Right ventricle myocardium inferior (tissue), 1 donor: ENCODE measurements at regions of chr15 and their contacts with region 1.

Region 1: GRCh38 chr15:78638658-78639314 is 2.2 kb downstream of the CHRNB4 start:
- DNase-seq: no peak
- ATAC-seq: no peak

Region 2: DNA sequence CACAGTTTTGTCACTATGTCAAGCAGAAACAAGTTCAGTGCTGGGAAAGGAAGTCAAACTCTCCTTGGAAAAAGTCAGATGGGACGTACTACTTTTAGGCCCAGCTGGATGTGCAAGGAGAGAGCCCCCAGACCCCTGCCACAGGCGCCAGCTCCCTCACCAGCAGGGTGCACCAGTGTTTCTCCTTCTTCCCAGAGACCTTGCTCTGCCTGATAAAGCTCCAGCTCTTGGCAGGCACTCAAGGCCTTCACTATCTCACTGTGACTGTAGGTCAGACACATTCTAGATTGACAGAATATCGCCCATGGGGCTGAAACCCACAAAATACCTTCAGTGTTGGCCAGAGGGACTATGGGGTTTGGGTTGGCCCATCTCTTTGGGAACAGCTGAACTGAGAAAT is 57.1 kb after region 1 on chr15:
- intact Hi-C with region 1: loop called (anchors 10 kb)
- DNase-seq: no peak
- ATAC-seq: peak; percentile 62

Region 3: DNA sequence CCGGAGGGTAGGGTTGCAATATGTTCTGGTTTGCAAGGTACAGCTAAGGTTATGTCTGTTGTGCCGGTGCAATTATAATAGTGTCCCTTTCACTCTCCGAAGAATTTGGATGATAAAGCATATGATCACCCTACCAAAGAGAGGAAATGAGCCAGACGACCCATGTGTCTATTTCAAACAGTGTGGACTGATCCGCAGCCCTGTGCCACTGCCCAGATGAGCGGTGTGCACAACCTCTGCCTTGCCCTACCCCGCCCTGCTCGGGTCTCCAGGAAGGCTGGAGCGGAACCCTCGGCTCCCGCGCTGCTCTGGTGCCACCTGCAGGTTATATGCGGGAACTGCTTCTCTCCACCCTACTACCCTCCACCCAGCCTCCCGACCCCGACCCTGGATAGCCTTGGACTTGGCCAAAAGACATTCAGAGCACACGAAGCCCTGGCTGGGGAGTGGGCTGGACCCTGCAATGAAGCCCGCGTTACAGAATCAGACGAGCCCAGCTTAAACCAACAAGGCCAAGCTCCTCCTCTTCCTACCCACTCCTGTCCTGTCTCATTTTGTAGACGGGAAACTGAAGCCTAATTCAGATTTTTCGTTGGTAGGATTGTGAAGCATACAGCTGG is 70.6 kb after region 1 on chr15:
- intact Hi-C with region 1: loop called (anchors 1 kb)
- DNase-seq: peak; percentile 82
- ATAC-seq: peak; percentile 92

Region 4: GRCh38 chr15:79989682-79990081 is 1350.9 kb after region 1 on chr15:
- intact Hi-C with region 1: no loop called
- DNase-seq: no peak
- ATAC-seq: no peak